Activated naive CD8-positive, alpha-beta T cell treated with anti-CD3 and anti-CD28 coated beads, Interleukin-2, amount 10 ng/mL, durations not matched to agents 7 days and 5 days (primary cell): ENCODE measurements at regions of chr15 and their contacts with region 1.

Region 1: GRCh38 chr15:73950831-73951561 is 24.7 kb downstream of the LOXL1 start:
- DNase-seq: peak; percentile 84
- ATAC-seq: peak; percentile 94
- H3K4me3 Mint-ChIP-seq: peak overlapping the region; percentile 78
- H3K27ac Mint-ChIP-seq: peak overlapping the region; percentile 90
- H3K4me1 Mint-ChIP-seq: peaks cover 12% of the 10 kb centered on the region
- H3K27me3 Mint-ChIP-seq: peaks cover 3% of the 10 kb centered on the region

Region 2: GRCh38 chr15:73305331-73306211 is 645.4 kb before region 1 on chr15:
- POLR2A ChIA-PET with region 1: no interaction called
- DNase-seq: no peak
- ATAC-seq: no peak
- H3K4me3 Mint-ChIP-seq: no peak overlapping the region
- H3K27ac Mint-ChIP-seq: no peak overlapping the region
- H3K4me1 Mint-ChIP-seq: peaks cover 5% of the 10 kb centered on the region
- H3K27me3 Mint-ChIP-seq: no peaks in the 10 kb centered on the region

Region 3: GRCh38 chr15:73914145-73914544 is 36.9 kb before region 1 on chr15:
- POLR2A ChIA-PET with region 1: no interaction called
- DNase-seq: peak; percentile 47
- ATAC-seq: peak; percentile 94
- H3K4me3 Mint-ChIP-seq: peak overlapping the region; percentile 56
- H3K27ac Mint-ChIP-seq: peak overlapping the region; percentile 86
- H3K4me1 Mint-ChIP-seq: peaks cover 25% of the 10 kb centered on the region
- H3K27me3 Mint-ChIP-seq: no peaks in the 10 kb centered on the region

Region 4: GRCh38 chr15:73964736-73965093 is 13.7 kb after region 1 on chr15:
- POLR2A ChIA-PET with region 1: interaction called, 38 read pairs
- DNase-seq: peak; percentile 93
- ATAC-seq: peak; percentile 85
- H3K4me3 Mint-ChIP-seq: peak overlapping the region; percentile 67
- H3K27ac Mint-ChIP-seq: peak overlapping the region; percentile 89
- H3K4me1 Mint-ChIP-seq: peaks cover 34% of the 10 kb centered on the region
- H3K27me3 Mint-ChIP-seq: no peaks in the 10 kb centered on the region